BJ (cell line): ENCODE measurements at regions of chr6 and their contacts with region 1.

Region 1: DNA sequence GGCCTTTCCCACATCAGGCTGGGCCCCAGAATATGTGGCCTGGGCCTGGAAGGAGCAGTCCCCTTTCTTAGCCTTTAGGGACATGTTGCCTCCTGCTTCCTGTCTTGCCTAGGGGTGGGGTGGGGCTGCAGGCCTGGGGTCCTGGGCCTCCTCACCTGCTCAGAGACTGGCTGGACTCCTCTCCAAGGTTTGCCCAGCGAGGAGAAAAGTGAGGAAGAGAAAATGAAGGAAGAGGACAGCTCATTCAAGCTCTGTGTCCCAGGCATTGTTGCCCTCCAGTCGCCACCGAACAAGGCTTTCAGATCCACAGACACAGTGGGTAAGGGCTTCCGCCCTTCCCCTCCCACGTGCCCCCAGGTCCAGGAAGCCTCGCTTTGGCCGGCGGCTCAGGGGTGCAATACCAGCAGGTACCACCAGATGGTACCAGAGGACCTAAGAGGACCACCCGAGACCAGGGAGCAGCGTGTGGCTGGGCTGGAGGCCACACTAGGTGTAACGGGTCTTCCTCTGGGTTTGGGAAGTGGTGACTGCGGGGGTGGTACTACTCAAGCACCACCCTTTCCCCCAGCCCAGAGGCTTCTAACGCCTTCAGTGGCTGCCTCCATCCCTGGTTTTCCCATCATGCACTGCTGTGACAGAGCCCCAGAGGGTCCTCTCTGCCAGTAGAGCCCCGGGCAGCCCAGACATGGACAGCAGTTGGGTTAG is 5.5 kb upstream of the BAK1 start:
- DNase-seq: no peak
- H3K4me3 ChIP-seq: no peak overlapping the region
- H3K27me3 ChIP-seq: no peaks in the 10 kb centered on the region
- CTCF ChIP-seq: peak; percentile 97

Region 2: DNA sequence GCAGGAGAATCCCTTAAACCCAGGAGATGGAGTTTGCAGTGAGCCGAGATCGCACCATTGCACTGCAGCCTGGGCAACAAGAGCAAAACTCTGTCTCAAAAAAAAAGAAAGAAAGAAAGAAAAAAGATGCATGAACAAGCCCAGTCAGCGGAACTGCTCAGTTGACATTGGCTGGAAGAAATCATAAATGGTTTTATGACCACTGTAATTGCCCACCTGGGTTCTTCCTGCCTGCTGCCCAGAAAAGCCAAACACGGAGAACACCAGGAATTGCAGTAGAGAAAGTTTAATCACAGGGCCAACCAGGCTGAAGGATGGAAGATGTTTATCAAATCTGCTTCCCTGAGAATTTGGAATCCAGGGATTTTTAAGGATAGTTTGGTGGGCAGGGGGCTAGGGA is 28.2 kb before region 1 on chr6:
- CTCF ChIA-PET with region 1: no interaction called
- POLR2A ChIA-PET with region 1: no interaction called
- DNase-seq: no peak
- H3K4me3 ChIP-seq: no peak overlapping the region
- H3K27me3 ChIP-seq: no peaks in the 10 kb centered on the region
- CTCF ChIP-seq: no peak

Region 3: DNA sequence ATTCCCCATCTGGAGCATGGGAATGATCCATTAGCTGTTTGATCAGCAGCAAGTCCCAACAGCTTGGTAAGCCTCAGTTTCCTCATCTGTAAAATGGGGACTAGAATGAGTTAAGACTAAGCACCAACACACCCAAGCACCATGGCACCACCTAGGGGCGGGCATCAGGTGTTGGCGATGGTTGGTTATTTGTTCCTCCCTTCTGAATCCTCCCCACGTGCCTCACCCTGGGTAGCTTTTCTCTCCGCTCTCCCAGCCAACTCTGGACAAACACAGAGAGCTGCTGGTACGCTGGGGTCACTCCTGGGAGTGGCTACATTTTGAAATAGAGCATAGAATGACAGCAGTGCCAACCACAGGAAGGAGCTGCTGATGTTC is 22.2 kb after region 1 on chr6:
- CTCF ChIA-PET with region 1: interaction called, 13 read pairs
- POLR2A ChIA-PET with region 1: no interaction called
- DNase-seq: no peak
- H3K4me3 ChIP-seq: no peak overlapping the region
- H3K27me3 ChIP-seq: no peaks in the 10 kb centered on the region
- CTCF ChIP-seq: 0 out of 2 replicates have a peak, but pooled peaks have one; percentile 9

Region 4: DNA sequence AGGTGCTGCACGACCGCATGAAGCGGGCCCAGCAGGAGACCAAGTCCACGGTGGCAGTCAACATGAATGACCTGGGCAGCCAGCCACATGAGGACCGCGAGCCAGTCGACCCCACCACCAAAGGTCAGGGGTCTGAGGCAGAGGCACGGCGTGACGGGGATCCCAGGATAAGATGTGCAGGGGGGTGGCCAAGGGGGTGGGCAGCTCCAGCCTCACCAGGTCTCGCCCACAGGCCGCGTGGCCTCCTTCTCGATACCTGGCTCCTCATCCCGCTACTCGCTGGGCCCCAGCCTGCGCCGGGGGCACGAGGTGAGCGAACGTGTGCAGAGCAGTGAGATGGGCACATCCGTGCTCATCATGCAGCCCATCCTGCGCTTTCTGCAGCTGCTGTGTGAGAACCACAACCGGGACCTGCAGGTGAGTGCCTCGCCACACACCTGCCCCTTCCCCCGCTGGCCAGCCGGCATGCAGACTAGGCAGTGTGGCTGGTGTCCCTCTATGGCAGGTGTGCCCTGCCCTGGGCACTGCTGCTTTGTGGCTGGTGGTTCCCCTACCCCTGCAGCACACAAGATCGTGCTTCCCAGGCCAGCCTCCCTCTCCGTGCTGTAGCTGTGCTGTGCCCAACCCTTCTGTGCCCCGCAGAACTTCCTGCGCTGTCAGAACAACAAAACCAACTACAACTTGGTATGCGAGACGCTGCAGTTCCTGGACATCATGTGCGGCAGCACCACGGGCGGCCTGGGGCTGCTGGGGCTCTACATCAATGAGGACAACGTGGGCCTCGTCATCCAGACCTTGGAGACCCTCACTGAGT is 100.1 kb after region 1 on chr6:
- CTCF ChIA-PET with region 1: interaction called, 13 read pairs
- POLR2A ChIA-PET with region 1: no interaction called
- DNase-seq: no peak
- H3K4me3 ChIP-seq: no peak overlapping the region
- H3K27me3 ChIP-seq: no peaks in the 10 kb centered on the region
- CTCF ChIP-seq: no peak

Region 5: DNA sequence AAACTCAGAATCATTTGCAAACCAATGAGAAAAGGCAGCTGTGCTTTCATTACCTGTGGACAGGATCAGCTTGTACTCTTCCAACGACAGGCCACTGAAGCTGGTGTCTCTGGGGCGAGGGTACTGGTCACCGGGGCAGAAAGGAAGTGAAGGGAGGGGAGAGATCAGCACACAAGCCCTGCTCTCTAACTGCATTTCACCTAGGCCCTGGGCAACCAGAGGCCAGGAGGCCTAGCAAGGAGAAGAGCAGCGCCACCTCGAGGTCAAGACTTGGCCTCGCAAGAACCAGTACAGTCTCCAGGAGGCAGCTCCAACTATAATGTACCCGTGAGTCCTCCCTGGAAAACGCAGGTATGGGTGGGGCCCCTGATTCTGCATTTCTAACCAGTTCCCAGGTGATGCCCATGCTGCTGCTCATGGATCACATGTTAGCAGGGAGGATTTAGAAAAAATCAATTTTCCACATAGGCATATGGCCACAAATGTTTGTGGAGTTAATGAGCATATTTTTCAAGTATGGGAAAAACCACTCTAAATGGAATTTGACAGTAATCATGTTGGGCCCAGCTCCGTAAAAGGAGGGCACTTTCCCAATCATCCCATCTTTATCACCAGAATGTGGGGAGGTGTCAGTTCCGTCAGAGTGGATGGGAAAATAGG is 115.0 kb after region 1 on chr6:
- CTCF ChIA-PET with region 1: interaction called, 335 read pairs
- POLR2A ChIA-PET with region 1: no interaction called
- DNase-seq: no peak
- H3K4me3 ChIP-seq: no peak overlapping the region
- H3K27me3 ChIP-seq: no peaks in the 10 kb centered on the region
- CTCF ChIP-seq: peak; percentile 88

Region 6: GRCh38 chr6:33744001-33744848 is 158.7 kb after region 1 on chr6:
- CTCF ChIA-PET with region 1: interaction called, 10 read pairs
- POLR2A ChIA-PET with region 1: no interaction called
- DNase-seq: no peak
- H3K4me3 ChIP-seq: no peak overlapping the region
- H3K27me3 ChIP-seq: no peaks in the 10 kb centered on the region
- CTCF ChIP-seq: peak; percentile 93

Region 7: GRCh38 chr6:33771146-33772081 is 185.9 kb after region 1 on chr6:
- CTCF ChIA-PET with region 1: interaction called, 11 read pairs
- POLR2A ChIA-PET with region 1: no interaction called
- DNase-seq: peak; percentile 96
- H3K4me3 ChIP-seq: no peak overlapping the region
- H3K27me3 ChIP-seq: no peaks in the 10 kb centered on the region
- CTCF ChIP-seq: peak; percentile 75